BJ (cell line): ENCODE measurements at regions of chr3 and their contacts with region 1.

Region 1: GRCh38 chr3:60573494-60573893 is 677.8 kb downstream of the FHIT start:
- DNase-seq: no peak
- H3K4me3 ChIP-seq: no peak overlapping the region
- H3K27me3 ChIP-seq: no peaks in the 10 kb centered on the region
- CTCF ChIP-seq: no peak

Region 2: DNA sequence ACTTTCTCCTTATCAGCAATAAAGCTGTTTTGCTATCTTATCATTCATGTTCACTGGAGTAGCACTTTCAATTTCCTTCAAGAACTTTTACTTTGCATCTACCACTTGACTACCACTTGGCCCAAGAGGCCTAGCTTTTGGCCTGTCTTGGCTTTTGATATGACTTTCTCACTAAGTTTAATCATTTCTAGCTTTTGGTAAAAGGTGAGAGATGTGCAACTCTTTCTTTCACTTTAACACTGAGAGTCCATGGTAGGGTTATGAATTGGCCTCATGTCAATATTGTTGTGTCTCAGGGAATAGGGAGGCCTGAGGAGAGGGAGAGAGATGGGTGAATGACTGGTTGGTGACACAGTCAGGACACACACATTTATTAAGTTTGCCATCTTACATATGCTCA is 1875.9 kb before region 1 on chr3:
- CTCF ChIA-PET with region 1: no interaction called
- POLR2A ChIA-PET with region 1: interaction called, 10 read pairs
- DNase-seq: no peak
- H3K4me3 ChIP-seq: no peak overlapping the region
- H3K27me3 ChIP-seq: no peaks in the 10 kb centered on the region
- CTCF ChIP-seq: no peak